Breast epithelium (tissue), 4 donors: ENCODE measurements at regions of chr20 and their contacts with region 1.

Region 1: DNA sequence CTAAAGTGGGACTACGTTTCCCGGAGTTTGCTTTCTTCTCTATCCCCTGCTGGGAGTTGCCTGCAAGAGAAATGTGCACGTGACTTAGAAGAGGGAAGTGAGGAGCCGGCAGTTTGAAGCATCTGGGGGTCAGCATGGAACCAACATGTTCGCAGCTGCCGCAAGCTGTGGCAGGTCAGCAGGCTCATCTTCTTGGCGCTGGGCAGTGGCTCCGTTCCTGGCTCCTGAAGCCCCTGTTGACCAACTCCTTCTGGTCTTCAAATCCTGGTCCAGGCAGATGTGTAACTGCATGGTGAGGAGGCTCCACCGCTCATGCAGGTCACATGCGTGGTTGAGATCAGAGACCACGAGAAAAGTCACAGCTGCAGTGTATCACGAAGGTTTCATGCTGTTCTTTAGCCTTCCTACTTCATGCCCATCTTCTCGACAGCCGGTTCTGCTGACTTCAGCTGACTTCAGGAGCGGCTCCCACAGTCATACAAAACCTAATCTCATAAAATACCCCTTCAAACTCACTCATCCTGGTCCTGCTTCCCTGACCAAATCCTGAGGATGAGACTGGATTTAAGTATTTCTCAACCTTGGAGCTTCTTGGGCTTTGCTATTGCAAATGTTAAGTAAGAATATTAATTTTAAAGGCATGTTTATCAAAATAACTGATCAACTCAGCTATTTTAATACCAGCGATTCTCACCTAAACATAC is 44.9 kb upstream of the BCAS1 start:
- DNase-seq: no peak
- H3K4me3 ChIP-seq: no peak overlapping the region
- H3K27ac ChIP-seq: no peak overlapping the region
- H3K4me1 ChIP-seq: no peaks in the 10 kb centered on the region
- H3K27me3 ChIP-seq: no peaks in the 10 kb centered on the region
- CTCF ChIP-seq: no peak
- POLR2A ChIP-seq: no peak

Region 2: GRCh38 chr20:54199721-54200176 is 84.4 kb after region 1 on chr20:
- intact Hi-C with region 1: loop called (anchors 10 kb)
- DNase-seq: peak; percentile 75 to 78
- H3K4me3 ChIP-seq: no peak overlapping the region
- H3K27ac ChIP-seq: no peak overlapping the region
- H3K4me1 ChIP-seq: no peaks in the 10 kb centered on the region
- H3K27me3 ChIP-seq: no peaks in the 10 kb centered on the region
- CTCF ChIP-seq: peak; percentile 83 to 96 (median 91)
- POLR2A ChIP-seq: no peak